Naive thymus-derived CD4-positive, alpha-beta T cell (primary cell): ENCODE measurements at regions of chr1 and their contacts with region 1.

Region 1: GRCh38 chr1:236603991-236604904 is at the start of gene HEATR1:
- DNase-seq: peak; percentile 58 to 88 (median 84)
- ATAC-seq: peak; percentile 94
- H3K4me3 ChIP-seq: peak within 1 kb of the TSS; percentile 88
- H3K4me3 Mint-ChIP-seq: peak within 1 kb of the TSS; percentile 91 to 99 (median 98)
- H3K27ac ChIP-seq: peak within 1 kb of the TSS; percentile 79
- H3K27ac Mint-ChIP-seq: peak within 1 kb of the TSS; percentile 93 to 98 (median 97)
- H3K4me1 ChIP-seq: peaks cover 13 to 14% of the 10 kb centered on the region in 2 donors
- H3K4me1 Mint-ChIP-seq: peaks cover 20 to 49% (median 32%) of the 10 kb centered on the region in 7 donors
- H3K27me3 ChIP-seq: peaks cover 0 to 4% of the 10 kb centered on the region in 2 donors
- H3K27me3 Mint-ChIP-seq: peaks cover 4 to 14% (median 13%) of the 10 kb centered on the region in 5 donors
- total RNA-seq, gene HEATR1: 29.3 to 58.7 (median 45.8) TPM

Region 2: DNA sequence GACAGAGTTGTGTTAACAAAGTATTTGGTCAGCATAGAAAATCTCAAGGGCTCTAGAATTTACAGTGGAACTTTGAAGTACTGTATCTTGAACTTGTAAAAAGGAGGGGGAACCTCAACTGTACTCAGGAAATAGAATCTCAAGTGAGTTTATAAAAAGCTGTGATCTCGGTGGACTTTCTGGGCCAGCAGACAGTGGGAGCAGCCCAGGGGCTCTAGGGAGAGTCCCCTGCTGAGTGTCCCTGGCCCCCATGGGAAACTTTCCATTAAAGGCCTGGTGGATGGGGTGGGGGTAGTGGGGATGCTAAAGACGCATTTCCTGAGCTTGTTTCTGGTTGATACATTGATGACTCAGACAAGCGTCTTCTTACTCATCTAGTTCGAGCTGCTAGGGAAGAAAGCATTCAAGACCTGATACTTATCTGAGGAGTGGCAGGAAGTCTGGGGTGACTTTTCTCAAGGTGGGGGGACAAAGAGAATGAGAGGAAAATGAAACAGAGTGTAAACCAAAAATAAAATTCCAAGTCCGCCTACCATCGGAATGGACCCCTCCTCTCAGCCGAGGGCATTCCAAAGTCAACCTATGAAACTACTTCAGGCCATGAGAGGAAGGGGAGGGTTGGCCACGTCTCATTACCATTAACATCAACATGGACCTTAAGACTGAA is 604.9 kb before region 1 on chr1:
- CTCF ChIA-PET with region 1: no interaction called
- POLR2A ChIA-PET with region 1: no interaction called
- intact Hi-C with region 1: loop called in 1 of 2 experiments (anchors 1 kb)
- DNase-seq: peak in 8 of 9 donors; percentile 7 to 75 (median 37)
- ATAC-seq: peak; percentile 90
- H3K4me3 ChIP-seq: no peak overlapping the region
- H3K4me3 Mint-ChIP-seq: peak overlapping the region in 9 of 10 donors; percentile 0 to 71 (median 55)
- H3K27ac ChIP-seq: peak overlapping the region; percentile 22
- H3K27ac Mint-ChIP-seq: peak overlapping the region; percentile 19 to 97 (median 80)
- H3K4me1 ChIP-seq: peaks cover 10 to 31% of the 10 kb centered on the region in 2 donors
- H3K4me1 Mint-ChIP-seq: peaks cover 10 to 71% (median 20%) of the 10 kb centered on the region in 7 donors
- H3K27me3 ChIP-seq: no peaks in the 10 kb centered on the region
- H3K27me3 Mint-ChIP-seq: no peaks in the 10 kb centered on the region

Region 3: DNA sequence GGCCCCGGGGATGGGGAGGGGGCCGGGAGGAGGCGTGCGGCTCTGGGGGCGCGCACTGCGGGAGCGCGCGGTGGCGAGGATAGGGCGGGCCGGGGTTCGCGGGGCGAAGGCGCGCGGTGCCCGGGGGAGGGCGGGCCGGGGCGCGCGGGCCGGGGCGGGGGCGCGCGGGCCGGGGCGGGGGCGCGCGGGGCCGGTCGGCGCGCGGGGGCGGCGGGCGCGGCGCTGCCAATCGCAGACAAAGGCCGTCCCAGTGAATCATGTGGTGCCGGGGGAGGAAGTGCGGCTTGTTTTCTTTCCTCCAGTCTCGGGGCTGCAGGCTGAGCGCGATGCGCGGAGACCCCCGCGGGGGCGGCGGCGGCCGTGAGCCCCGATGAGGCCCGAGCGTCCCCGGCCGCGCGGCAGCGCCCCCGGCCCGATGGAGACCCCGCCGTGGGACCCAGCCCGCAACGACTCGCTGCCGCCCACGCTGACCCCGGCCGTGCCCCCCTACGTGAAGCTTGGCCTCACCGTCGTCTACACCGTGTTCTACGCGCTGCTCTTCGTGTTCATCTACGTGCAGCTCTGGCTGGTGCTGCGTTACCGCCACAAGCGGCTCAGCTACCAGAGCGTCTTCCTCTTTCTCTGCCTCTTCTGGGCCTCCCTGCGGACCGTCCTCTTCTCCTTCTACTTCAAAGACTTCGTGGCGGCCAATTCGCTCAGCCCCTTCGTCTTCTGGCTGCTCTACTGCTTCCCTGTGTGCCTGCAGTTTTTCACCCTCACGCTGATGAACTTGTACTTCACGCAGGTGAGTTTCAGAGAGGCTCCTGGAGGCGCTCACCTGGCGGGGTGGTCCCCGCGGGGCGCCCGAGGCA is 461.8 kb before region 1 on chr1 and contains the start of gene GPR137B:
- CTCF ChIA-PET with region 1: no interaction called
- POLR2A ChIA-PET with region 1: no interaction called
- intact Hi-C with region 1: loop called in 1 of 2 experiments (anchors 10 kb)
- DNase-seq: peak; percentile 17 to 74 (median 37)
- ATAC-seq: peak; percentile 79
- H3K4me3 ChIP-seq: peak within 1 kb of the TSS; percentile 91
- H3K4me3 Mint-ChIP-seq: peak within 1 kb of the TSS; percentile 87 to 99 (median 97)
- H3K27ac ChIP-seq: peak within 1 kb of the TSS; percentile 7
- H3K27ac Mint-ChIP-seq: peak within 1 kb of the TSS in 6 of 9 donors; percentile 52 to 90 (median 76)
- H3K4me1 ChIP-seq: peaks cover 12 to 15% of the 10 kb centered on the region in 2 donors
- H3K4me1 Mint-ChIP-seq: peaks cover 33 to 53% (median 38%) of the 10 kb centered on the region in 7 donors
- H3K27me3 ChIP-seq: no peaks in the 10 kb centered on the region
- H3K27me3 Mint-ChIP-seq: peaks cover 13 to 47% (median 16%) of the 10 kb centered on the region in 5 donors
- total RNA-seq, gene GPR137B: 6.4 to 15.3 (median 7.0) TPM

Region 4: DNA sequence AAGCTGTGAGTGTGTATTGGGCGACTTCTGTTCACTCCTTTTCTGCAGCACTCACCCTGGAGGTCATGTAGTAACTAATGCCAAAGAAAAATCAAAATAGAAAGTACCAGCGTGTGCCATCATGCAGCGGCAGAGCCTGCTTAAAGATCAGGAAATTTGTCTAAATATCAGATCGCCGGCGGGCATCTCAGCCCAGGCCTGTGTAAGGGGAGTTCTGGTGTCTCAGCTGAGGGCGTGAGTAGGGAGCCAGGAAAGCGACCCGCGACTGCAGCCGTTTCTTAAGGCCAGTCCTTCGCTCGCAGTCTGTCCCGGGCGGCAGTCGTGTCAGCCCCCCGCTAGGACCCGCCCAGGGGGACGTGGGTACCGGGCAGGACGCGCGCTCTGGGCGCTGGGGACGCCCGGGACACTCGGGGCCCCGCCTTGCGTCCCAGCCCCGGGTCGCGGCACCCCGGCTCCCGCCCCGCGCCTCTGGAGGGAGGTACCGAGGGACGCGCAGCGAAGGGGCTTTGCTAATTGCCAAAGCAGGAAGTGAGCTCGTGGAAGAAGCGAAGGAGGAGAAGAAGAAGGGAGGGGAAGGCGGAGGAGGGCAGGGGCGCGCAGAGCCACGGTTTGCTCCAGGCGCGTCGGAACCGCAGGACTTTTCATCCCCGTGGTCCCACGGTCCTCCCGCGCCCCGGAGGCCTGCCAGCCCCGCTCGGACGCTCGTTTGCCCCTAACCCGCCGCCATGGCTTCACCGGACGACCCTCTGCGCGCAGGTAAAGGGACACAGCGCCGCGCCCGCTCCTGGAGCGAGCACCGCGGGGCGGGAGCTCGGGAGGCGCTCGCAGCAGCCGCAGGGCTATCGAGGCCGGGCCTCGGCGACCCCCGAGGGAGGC is 209.1 kb before region 1 on chr1:
- CTCF ChIA-PET with region 1: no interaction called
- POLR2A ChIA-PET with region 1: no interaction called
- intact Hi-C with region 1: loop called in 1 of 2 experiments (anchors 5 kb)
- DNase-seq: peak in 3 of 9 donors; percentile 13 to 62 (median 29)
- ATAC-seq: peak; percentile 75
- H3K4me3 ChIP-seq: peak overlapping the region; percentile 70
- H3K4me3 Mint-ChIP-seq: peak overlapping the region; percentile 70 to 96 (median 86)
- H3K27ac ChIP-seq: no peak overlapping the region
- H3K27ac Mint-ChIP-seq: peak overlapping the region in 1 of 9 donors; percentile 86
- H3K4me1 ChIP-seq: peaks cover 3 to 10% of the 10 kb centered on the region in 2 donors
- H3K4me1 Mint-ChIP-seq: peaks cover 15 to 43% (median 22%) of the 10 kb centered on the region in 7 donors
- H3K27me3 ChIP-seq: peaks cover 0 to 5% of the 10 kb centered on the region in 2 donors
- H3K27me3 Mint-ChIP-seq: peaks cover 27 to 67% (median 51%) of the 10 kb centered on the region in 5 donors

Region 5: DNA sequence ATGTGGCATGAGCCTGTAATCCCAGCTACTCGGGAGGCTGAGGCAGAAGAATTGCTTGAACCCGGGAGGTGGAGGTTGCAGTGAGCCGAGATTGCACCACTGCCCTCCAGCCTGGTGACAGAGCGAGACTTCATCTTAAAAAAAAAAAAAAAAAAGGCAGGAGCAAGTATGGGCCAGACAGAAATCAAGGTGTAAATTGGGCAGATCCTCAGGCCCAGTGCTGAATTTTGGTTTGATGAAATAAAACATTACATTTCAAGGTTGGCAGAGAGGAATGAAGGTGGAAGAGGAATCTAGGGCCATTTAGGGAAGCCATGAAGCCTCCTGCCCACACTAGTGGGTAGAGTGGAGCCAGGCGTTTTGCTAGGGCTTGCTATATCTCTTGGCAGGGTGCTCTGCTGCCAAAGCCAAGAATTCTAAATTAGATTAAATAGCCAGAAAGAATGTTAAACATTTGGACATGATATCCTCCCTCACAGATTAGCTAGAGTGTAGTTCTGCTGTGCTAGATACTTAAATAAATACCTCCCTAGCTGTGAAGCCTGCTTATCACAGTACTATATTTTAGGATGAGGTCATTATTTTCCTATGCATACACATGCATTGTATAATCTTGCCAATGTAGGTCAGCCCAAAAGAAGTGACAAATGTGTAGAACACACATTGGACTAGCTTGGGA is 97.1 kb before region 1 on chr1:
- CTCF ChIA-PET with region 1: no interaction called
- POLR2A ChIA-PET with region 1: no interaction called
- intact Hi-C with region 1: no loop called
- DNase-seq: no peak
- ATAC-seq: no peak
- H3K4me3 ChIP-seq: no peak overlapping the region
- H3K4me3 Mint-ChIP-seq: no peak overlapping the region
- H3K27ac ChIP-seq: no peak overlapping the region
- H3K27ac Mint-ChIP-seq: no peak overlapping the region
- H3K4me1 ChIP-seq: peaks cover 3 to 11% of the 10 kb centered on the region in 2 donors
- H3K4me1 Mint-ChIP-seq: peaks cover 8 to 27% (median 13%) of the 10 kb centered on the region in 7 donors
- H3K27me3 ChIP-seq: no peaks in the 10 kb centered on the region
- H3K27me3 Mint-ChIP-seq: peaks cover 0 to 24% (median 0%) of the 10 kb centered on the region in 5 donors

Region 6: DNA sequence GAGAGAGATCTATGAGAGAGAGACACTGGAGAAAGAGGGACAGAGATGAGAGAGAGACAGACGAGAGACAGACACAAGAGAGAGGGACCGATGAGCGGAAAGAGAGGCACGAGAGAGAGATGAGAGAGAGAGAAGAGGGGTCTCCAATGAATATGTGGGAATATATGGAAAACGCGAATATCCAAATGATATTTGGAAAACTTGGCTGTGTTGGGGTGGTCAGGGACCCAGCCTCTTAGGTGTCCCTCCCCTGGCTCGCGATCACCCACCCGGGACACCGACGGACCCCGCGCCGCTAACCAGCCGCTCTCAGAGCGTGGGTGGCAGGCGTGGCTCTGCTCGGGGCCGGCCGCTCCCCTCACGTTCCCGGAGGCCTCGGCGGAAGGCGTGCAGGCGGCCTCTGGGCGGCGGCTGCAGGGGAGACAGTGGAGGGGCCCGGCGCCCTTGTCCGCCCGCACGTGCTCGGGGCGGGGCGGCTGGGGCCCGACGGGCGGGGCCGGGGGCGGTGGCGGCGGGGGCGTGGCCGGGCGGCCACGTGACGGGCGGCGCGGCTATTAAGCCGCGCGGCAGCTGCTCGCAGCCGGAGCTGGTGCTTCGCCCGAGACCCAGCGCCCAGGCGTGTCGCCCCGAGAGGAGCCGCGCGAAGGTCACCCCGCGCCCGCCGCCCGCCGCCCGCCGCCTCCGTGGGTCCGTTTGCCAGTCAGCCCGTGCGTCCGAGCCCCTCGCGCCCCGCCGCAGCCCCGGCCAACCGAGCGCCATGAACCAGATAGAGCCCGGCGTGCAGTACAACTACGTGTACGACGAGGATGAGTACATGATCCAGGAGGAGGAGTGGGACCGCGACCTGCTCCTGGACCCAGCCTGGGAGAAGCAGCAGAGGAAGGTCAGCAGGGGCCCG is 81.9 kb after region 1 on chr1 and contains the start of gene ACTN2:
- CTCF ChIA-PET with region 1: no interaction called
- POLR2A ChIA-PET with region 1: no interaction called
- intact Hi-C with region 1: loop called in 1 of 2 experiments (anchors 5 kb)
- DNase-seq: peak; percentile 4 to 55 (median 24)
- ATAC-seq: peak; percentile 88
- H3K4me3 ChIP-seq: peak within 1 kb of the TSS; percentile 54
- H3K4me3 Mint-ChIP-seq: peak within 1 kb of the TSS; percentile 75 to 96 (median 80)
- H3K27ac ChIP-seq: no peak within 1 kb of the TSS
- H3K27ac Mint-ChIP-seq: peak within 1 kb of the TSS in 5 of 9 donors; percentile 16 to 90 (median 52)
- H3K4me1 ChIP-seq: peaks cover 12 to 13% of the 10 kb centered on the region in 2 donors
- H3K4me1 Mint-ChIP-seq: peaks cover 9 to 32% (median 25%) of the 10 kb centered on the region in 7 donors
- H3K27me3 ChIP-seq: peaks cover 8 to 14% of the 10 kb centered on the region in 2 donors
- H3K27me3 Mint-ChIP-seq: peaks cover 34 to 60% (median 50%) of the 10 kb centered on the region in 5 donors
- total RNA-seq, gene ACTN2: not detected

Region 7: GRCh38 chr1:236868625-236869467 is 264.6 kb after region 1 on chr1:
- CTCF ChIA-PET with region 1: interaction called, 4 read pairs
- POLR2A ChIA-PET with region 1: no interaction called
- intact Hi-C with region 1: loop called (anchors 1 to 2 kb)
- DNase-seq: peak in 8 of 9 donors; percentile 14 to 58 (median 46)
- ATAC-seq: peak; percentile 73
- H3K4me3 ChIP-seq: no peak overlapping the region
- H3K4me3 Mint-ChIP-seq: no peak overlapping the region
- H3K27ac ChIP-seq: no peak overlapping the region
- H3K27ac Mint-ChIP-seq: peak overlapping the region in 1 of 9 donors; percentile 41
- H3K4me1 ChIP-seq: no peaks in the 10 kb centered on the region
- H3K4me1 Mint-ChIP-seq: peaks cover 0 to 16% (median 0%) of the 10 kb centered on the region in 7 donors
- H3K27me3 ChIP-seq: no peaks in the 10 kb centered on the region
- H3K27me3 Mint-ChIP-seq: no peaks in the 10 kb centered on the region